Gastrocnemius medialis (tissue), 4 donors: ENCODE measurements at regions of chr3 and their contacts with region 1.

Region 1: DNA sequence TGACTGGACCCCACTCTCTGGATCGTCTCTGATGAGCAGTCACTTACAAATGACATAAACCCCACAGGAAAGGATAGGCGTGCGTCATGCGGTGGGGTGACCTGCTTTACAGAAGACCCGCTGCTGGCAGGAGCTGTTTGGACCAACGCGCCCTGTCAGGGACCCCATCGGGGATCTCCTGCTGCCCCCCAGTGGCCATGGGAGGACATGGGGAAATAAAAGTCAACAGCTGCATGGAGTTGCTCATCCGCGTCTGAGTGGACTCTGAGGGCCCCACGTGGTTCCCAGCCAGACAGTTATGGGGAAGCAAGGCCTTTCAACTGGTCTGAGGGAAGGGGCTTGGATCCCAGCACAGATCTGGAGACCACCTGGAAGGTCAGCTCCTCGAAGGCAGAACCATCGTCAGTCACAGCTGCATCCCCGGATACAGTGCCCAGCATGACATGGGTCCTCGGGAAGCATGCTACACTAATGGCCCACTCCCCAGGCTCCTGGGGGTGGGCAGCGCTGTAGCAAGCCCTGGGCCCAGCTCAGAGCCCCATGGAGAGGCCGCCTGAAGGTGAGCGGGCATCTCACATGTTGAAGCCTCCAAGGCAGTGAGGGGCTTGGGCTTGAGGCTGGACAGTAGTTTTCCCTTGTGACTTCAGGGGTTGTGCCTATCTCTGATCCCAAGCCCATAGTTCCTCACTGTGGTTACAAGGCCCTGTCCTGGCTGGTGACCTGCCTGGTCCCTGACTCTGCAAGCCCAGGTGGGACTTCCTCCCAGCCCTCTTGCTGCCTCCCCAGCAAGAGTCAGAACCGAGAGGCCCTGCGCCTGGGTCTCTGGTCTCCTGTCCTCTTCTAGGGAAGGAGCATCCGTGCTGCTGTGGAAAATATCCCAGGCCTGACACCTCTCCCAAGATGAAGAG is 32.3 kb downstream of the PTH1R start:
- DNase-seq: peak; percentile 65 to 82
- ATAC-seq: peak; percentile 73 to 89
- H3K4me3 ChIP-seq: no peak overlapping the region
- H3K27ac ChIP-seq: no peak overlapping the region
- H3K4me1 ChIP-seq: peaks cover 15 to 20% of the 10 kb centered on the region in 2 donors
- H3K27me3 ChIP-seq: no peaks in the 10 kb centered on the region
- CTCF ChIP-seq: peak; percentile 83 to 94 (median 87)
- POLR2A ChIP-seq: no peak

Region 2: DNA sequence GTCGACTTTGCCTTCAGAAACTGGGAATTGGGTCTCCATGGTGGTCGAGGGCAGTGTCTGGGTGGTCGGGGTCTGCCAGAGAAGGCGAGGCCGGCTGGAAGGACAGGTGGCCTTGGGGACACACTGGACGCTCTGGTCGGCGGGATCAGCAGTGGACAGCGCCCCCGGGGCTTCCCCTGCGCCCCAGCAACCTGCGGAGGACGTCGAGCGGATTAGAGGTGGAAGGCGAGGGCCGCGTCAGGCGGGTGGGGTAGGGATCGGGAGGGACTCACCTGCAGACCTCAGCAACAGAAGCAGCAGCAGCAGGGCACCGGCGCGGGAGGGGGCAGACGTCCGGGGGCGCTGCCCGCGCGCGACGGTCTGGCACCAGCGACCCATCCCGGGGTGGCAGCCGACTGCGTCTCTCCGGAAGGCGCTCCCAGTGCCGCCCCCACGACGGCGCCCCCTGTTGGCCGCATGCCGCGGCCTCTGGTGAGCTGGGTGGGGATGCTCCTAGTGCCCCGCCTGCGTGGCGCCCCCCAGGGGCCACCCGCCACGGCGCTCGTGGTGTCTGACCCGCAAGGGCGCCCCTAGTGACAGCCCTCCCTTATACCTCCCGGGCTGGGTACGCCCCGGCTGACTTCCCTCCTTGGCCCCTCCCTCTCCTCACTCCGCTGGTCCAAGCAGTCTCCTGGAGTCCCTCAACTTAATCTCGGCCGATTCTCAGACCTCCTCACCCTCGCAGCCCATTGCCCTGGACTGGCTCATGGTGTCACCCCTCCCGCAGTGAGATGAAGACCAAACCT is 192.2 kb before region 1 on chr3 and contains the start of gene PRSS50:
- in situ Hi-C with region 1: loop called in 2 of 4 experiments (anchors 10 kb)
- intact Hi-C with region 1: no loop called
- DNase-seq: no peak
- ATAC-seq: no peak
- H3K4me3 ChIP-seq: no peak within 1 kb of the TSS
- H3K27ac ChIP-seq: no peak within 1 kb of the TSS
- H3K4me1 ChIP-seq: no peaks in the 10 kb centered on the region
- H3K27me3 ChIP-seq: peaks cover 0 to 8% (median 2%) of the 10 kb centered on the region in 3 donors
- CTCF ChIP-seq: peak in 2 of 5 experiments; percentile 25 to 28
- POLR2A ChIP-seq: no peak
- total RNA-seq, gene PRSS50: not detected

Region 3: GRCh38 chr3:46845791-46846623 is 63.8 kb before region 1 on chr3:
- in situ Hi-C with region 1: no loop called
- intact Hi-C with region 1: loop called (anchors 5 kb)
- DNase-seq: peak; percentile 41 to 61
- ATAC-seq: peak; percentile 51 to 59
- H3K4me3 ChIP-seq: peak overlapping the region; percentile 51 to 58 (median 55)
- H3K27ac ChIP-seq: peak overlapping the region; percentile 58 to 81 (median 75)
- H3K4me1 ChIP-seq: peaks cover 5 to 25% of the 10 kb centered on the region in 2 donors
- H3K27me3 ChIP-seq: no peaks in the 10 kb centered on the region
- CTCF ChIP-seq: peak in 4 of 5 experiments; percentile 40 to 51 (median 45)
- POLR2A ChIP-seq: peak in 1 of 2 donors; percentile 28

Region 4: GRCh38 chr3:46866720-46867549 is 42.9 kb before region 1 on chr3:
- in situ Hi-C with region 1: no loop called
- intact Hi-C with region 1: loop called (anchors 1 kb)
- DNase-seq: peak; percentile 41 to 68
- ATAC-seq: peak; percentile 40 to 56
- H3K4me3 ChIP-seq: peak overlapping the region in 2 of 4 donors; percentile 7 to 19
- H3K27ac ChIP-seq: peak overlapping the region; percentile 68 to 89 (median 72)
- H3K4me1 ChIP-seq: peaks cover 34 to 36% of the 10 kb centered on the region in 2 donors
- H3K27me3 ChIP-seq: no peaks in the 10 kb centered on the region
- CTCF ChIP-seq: peak; percentile 86 to 95 (median 91)
- POLR2A ChIP-seq: no peak

Region 5: GRCh38 chr3:46878789-46879436 is 30.9 kb before region 1 on chr3:
- in situ Hi-C with region 1: no loop called
- intact Hi-C with region 1: no loop called
- DNase-seq: no peak
- ATAC-seq: no peak
- H3K4me3 ChIP-seq: no peak overlapping the region
- H3K27ac ChIP-seq: no peak overlapping the region
- H3K4me1 ChIP-seq: peaks cover 12 to 17% of the 10 kb centered on the region in 2 donors
- H3K27me3 ChIP-seq: peaks cover 7 to 29% (median 19%) of the 10 kb centered on the region in 3 donors
- CTCF ChIP-seq: no peak
- POLR2A ChIP-seq: no peak

Region 6: GRCh38 chr3:46987743-46988401 is 78.1 kb after region 1 on chr3:
- in situ Hi-C with region 1: loop called in 1 of 4 experiments (anchors 10 kb)
- intact Hi-C with region 1: no loop called
- DNase-seq: no peak
- ATAC-seq: peak; percentile 15 to 24
- H3K4me3 ChIP-seq: peak overlapping the region in 2 of 4 donors; percentile 21 to 27
- H3K27ac ChIP-seq: peak overlapping the region; percentile 1 to 59 (median 40)
- H3K4me1 ChIP-seq: no peaks in the 10 kb centered on the region
- H3K27me3 ChIP-seq: no peaks in the 10 kb centered on the region
- CTCF ChIP-seq: no peak
- POLR2A ChIP-seq: no peak